ENCODE measurements at regions of chr4 and their contacts with region 1.

Region 1: DNA sequence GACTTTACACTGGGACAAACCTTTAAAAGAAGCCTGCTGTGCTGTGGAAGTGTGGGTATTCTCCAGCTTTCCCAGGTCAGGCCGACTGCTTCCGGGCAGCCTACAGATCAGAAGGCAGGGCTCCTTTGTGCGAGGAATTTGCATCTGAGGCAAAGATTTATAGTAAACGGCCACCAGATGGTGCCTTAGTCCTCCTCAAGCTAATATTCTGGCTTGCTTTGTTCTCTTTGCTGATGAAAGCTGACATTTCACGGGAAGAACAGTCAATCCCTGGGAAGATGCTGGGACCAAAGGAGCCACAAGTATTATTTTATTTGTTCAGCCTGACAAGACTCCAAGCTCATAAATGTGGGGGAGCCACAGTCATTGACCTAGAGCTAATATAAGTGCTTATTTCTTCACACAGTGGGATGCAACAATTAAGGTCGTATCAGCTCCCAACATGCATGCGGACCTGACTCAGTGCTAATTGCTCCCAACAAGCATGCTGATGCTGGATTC is 120.7 kb upstream of the TRIM2 start:
- DNase-seq: peak; percentile 50 to 65 (median 56)
- ATAC-seq: peak; percentile 87
- H3K4me3 ChIP-seq: no peak overlapping the region
- H3K27ac ChIP-seq: no peak overlapping the region
- H3K4me1 ChIP-seq: no peaks in the 10 kb centered on the region
- H3K27me3 ChIP-seq: peaks cover 4 to 52% of the 10 kb centered on the region in 2 experiments
- CTCF ChIP-seq: peak; percentile 60 to 69 (median 65)
- EP300 ChIP-seq: no peak
- POLR2A ChIP-seq: no peak
- RAD21 ChIP-seq: peak; percentile 61 to 64

Region 2: GRCh38 chr4:152850377-152850776 is 233.1 kb before region 1 on chr4:
- CTCF ChIA-PET with region 1: interaction called, 20 read pairs
- POLR2A ChIA-PET with region 1: no interaction called
- in situ Hi-C with region 1: no loop called
- intact Hi-C with region 1: loop called (anchors 1 kb)
- DNase-seq: peak in 1 of 4 experiments; percentile 1
- ATAC-seq: no peak
- H3K4me3 ChIP-seq: no peak overlapping the region
- H3K27ac ChIP-seq: no peak overlapping the region
- H3K4me1 ChIP-seq: no peaks in the 10 kb centered on the region
- H3K27me3 ChIP-seq: no peaks in the 10 kb centered on the region
- CTCF ChIP-seq: no peak
- EP300 ChIP-seq: no peak
- POLR2A ChIP-seq: no peak
- RAD21 ChIP-seq: no peak

Region 3: GRCh38 chr4:152937336-152938236 is 145.9 kb before region 1 on chr4:
- CTCF ChIA-PET with region 1: no interaction called
- POLR2A ChIA-PET with region 1: no interaction called
- in situ Hi-C with region 1: no loop called
- intact Hi-C with region 1: loop called (anchors 2 kb)
- DNase-seq: peak; percentile 75 to 88 (median 82)
- ATAC-seq: peak; percentile 70
- H3K4me3 ChIP-seq: peak overlapping the region; percentile 50
- H3K27ac ChIP-seq: no peak overlapping the region
- H3K4me1 ChIP-seq: peaks cover 0 to 26% of the 10 kb centered on the region in 2 experiments; a peak in 4 of 5 replicates
- H3K27me3 ChIP-seq: peaks cover 17 to 57% of the 10 kb centered on the region in 2 experiments
- CTCF ChIP-seq: no peak
- EP300 ChIP-seq: peak; percentile 13; the same call in 1 of the 2 replicates
- POLR2A ChIP-seq: no peak
- RAD21 ChIP-seq: no peak

Region 4: DNA sequence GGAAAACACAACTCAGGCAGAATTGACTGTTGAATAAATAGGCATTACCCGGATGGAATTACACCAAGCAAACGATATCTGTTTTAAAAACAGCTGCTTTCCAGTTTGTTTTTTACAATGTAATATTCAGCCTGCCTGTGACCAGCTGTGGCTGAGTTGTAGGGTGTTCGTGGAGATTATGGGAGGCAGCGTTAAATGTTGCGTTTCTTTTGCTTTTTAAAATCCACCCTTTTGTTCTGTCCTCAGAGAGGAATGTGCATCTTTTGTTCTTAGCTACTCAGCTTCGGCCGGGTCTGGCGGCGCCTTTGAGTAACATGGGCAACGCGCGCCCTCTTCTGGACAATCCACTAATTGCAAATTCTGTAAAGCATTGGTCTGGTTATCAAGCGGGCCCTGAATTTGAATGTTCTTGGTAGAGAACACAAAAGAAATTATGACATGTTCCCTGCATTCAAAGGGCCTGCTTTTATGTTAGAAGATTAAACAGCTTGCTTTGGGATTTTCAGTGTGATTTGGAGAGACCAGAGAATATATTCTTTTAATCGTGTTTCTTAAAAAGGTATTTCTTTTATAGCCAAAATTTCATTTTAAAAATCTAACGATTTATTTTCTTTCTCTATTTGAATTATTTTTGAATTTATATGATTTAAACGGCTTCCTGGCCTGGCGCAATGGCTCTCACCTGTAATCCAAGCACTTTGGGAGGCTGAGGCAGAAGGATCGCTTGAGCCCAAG is 44.4 kb after region 1 on chr4:
- CTCF ChIA-PET with region 1: interaction called, 5 read pairs
- POLR2A ChIA-PET with region 1: interaction called, 3 read pairs
- in situ Hi-C with region 1: no loop called
- intact Hi-C with region 1: loop called (anchors 1 kb)
- DNase-seq: peak; percentile 61 to 84 (median 76)
- ATAC-seq: peak; percentile 96
- H3K4me3 ChIP-seq: no peak overlapping the region
- H3K27ac ChIP-seq: no peak overlapping the region
- H3K4me1 ChIP-seq: no peaks in the 10 kb centered on the region
- H3K27me3 ChIP-seq: peaks cover 0 to 11% of the 10 kb centered on the region in 2 experiments; a peak in 3 of 5 replicates
- CTCF ChIP-seq: peak; percentile 86 to 88 (median 86)
- EP300 ChIP-seq: no peak
- POLR2A ChIP-seq: no peak
- RAD21 ChIP-seq: peak; percentile 79 to 90

Region 5: DNA sequence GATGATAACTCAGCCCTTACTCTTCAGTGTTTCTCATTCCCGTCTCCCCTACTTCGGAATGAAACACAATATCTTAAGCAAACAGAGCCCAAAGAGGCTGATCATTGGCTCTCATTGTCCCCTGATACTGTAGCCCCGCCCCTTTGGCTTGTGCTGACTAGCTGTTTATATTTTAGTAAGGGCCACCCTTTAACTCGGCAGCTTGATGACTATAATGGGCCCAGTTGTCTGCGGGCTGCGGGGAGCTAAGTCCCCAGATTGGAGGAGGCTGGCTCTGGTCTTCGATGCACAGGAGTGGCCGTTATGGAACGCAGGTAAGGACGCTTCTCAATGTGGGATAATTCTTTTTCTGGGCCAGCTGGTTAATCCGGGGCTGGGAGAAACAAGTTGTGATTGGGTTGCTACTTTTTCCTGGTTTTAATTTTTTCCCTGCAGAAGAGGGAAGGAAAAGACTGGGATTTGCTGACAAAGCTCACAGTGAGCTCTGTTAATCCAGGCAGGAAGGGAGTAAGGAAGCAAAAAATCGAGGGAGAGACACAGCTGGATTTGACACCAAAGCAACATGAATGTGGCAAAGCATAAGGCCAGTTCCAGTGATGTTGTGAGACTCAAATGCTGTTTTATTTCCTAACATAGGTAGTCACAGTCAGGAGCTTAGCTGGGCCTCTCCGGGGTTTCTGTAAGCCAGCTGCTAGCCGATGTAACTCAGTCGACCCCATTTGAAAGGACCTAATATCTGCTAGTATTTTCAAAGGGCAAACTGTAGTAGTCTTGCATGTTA is 120.9 kb after region 1 on chr4 and contains the start of gene TRIM2:
- CTCF ChIA-PET with region 1: no interaction called
- POLR2A ChIA-PET with region 1: no interaction called
- in situ Hi-C with region 1: no loop called
- intact Hi-C with region 1: no loop called
- DNase-seq: peak; percentile 59 to 73 (median 65)
- ATAC-seq: peak; percentile 86
- H3K4me3 ChIP-seq: no peak within 1 kb of the TSS
- H3K27ac ChIP-seq: no peak within 1 kb of the TSS
- H3K4me1 ChIP-seq: peaks cover 5% of the 10 kb centered on the region in 2 experiments
- H3K27me3 ChIP-seq: peaks cover 4 to 19% of the 10 kb centered on the region in 2 experiments; a peak in 3 of 5 replicates
- CTCF ChIP-seq: no peak
- EP300 ChIP-seq: no peak
- POLR2A ChIP-seq: no peak
- RAD21 ChIP-seq: no peak
- polyA plus RNA-seq, gene TRIM2: 0.01 TPM

Region 6: DNA sequence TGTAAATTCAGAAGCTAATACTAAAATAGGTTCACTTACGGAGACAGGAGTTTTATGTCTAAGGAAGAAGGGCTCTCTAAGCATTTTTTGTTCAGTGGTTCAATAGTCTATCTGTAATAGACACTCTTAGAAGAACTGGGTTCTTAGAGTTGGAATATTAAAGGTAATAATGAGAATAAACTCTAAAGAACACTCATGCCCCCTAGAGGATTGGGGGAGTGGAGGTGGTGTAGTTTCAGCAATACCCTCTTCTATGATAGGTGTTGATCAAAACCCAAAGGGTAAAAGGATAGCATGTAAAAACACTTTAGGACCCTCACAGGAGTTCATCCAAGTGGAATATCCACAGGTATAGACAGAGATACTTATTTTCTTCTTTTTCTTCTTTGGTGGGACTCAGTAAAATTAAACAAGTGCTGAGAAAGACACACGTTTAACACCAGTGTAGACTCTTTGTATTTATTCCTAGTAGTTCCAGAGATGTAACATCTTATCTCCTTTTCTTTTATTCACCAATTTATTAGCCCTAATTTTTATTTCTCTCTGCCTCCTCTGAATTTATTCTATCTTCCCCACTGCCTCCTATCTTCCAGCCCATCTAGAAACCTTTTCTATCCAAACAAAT is 235.3 kb after region 1 on chr4:
- CTCF ChIA-PET with region 1: interaction called, 3 read pairs
- POLR2A ChIA-PET with region 1: no interaction called
- in situ Hi-C with region 1: no loop called
- intact Hi-C with region 1: loop called (anchors 5 kb)
- DNase-seq: peak; percentile 18 to 51 (median 34)
- ATAC-seq: peak; percentile 90
- H3K4me3 ChIP-seq: no peak overlapping the region
- H3K27ac ChIP-seq: no peak overlapping the region
- H3K4me1 ChIP-seq: no peaks in the 10 kb centered on the region
- H3K27me3 ChIP-seq: peaks cover 4 to 11% of the 10 kb centered on the region in 2 experiments; a peak in 4 of 5 replicates
- CTCF ChIP-seq: peak; percentile 46 to 74 (median 55); a peak in 3 of 6 replicates
- EP300 ChIP-seq: no peak
- POLR2A ChIP-seq: no peak
- RAD21 ChIP-seq: peak; percentile 48 to 71

Region 7: DNA sequence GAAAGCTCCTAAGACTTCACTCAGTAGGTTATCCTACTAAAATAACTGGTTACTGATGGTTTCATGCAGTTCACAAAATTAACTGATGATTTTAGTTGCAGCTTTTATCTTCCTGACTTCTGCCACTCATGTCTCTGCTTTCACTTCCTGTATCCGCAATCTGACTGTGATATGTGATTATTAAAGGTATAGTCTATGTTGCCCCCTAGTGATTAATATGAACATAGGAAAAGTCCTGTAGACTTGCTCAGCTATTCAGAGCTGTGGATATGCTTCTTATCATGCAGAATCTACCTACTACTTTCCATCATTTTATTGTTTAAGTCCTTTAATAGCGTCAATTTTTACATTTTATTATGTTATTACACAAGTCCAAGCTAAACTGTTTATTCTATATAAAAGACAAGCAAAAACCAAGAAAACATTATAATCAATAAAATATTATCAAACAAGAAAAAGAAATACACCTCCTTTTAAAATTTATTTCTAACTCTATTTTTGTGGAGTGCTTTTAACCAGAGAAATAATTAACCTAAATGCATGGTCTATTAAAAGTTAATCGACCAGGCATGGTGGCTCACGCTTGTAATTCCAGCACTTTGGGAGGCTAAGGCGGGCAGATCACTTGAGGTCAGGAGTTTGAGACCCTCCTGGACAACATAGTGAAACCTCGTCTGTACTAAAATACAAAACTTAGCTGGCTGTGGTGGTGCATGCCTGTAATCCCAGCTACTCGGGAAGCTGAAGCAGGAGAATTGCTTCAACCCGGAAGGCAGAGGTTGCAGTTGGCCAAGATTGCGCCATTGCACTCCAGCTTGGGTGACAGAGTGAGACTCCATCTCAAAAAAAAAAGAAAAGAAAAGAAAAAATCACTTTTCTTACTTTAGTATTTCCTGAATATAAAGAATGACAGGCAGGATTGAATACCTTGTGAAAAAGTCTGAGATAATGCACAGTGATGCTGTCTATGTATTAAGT is 560.2 kb after region 1 on chr4:
- CTCF ChIA-PET with region 1: interaction called, 3 read pairs
- POLR2A ChIA-PET with region 1: no interaction called
- in situ Hi-C with region 1: no loop called
- intact Hi-C with region 1: loop called (anchors 10 kb)
- DNase-seq: peak; percentile 44 to 57 (median 55)
- ATAC-seq: peak; percentile 83
- H3K4me3 ChIP-seq: no peak overlapping the region
- H3K27ac ChIP-seq: no peak overlapping the region
- H3K4me1 ChIP-seq: peaks cover 0 to 7% of the 10 kb centered on the region in 2 experiments; a peak in 3 of 5 replicates
- H3K27me3 ChIP-seq: no peaks in the 10 kb centered on the region
- CTCF ChIP-seq: peak; percentile 35 to 63 (median 53); a peak in 5 of 6 replicates
- EP300 ChIP-seq: no peak
- POLR2A ChIP-seq: no peak
- RAD21 ChIP-seq: peak; percentile 29 to 72; a peak in 3 of 4 replicates